Esophagus muscularis mucosa (tissue), 4 donors: ENCODE measurements at regions of chr4 and their contacts with region 1.

Region 1: DNA sequence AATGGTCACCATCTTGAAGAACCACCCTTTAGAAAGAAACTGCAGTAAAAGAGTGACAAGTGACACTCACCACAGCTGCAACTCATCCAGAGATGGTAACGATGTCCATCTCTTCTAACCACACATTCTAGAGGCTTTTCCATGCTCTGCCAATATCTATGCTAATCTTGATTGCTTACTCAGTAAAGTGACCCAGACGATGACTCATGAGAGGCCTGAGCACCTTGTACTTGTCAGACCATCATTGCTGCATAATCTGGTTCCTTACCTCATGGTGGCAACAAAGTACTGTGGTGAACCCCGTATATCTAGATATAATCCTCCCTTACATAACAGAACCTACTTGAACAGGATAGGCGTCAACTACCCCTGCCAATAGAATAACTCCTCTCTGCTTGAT is 75.6 kb downstream of the CCNG2 start:
- DNase-seq: no peak
- H3K4me3 ChIP-seq: no peak overlapping the region
- H3K27ac ChIP-seq: no peak overlapping the region
- H3K4me1 ChIP-seq: peaks cover 0 to 3% (median 0%) of the 10 kb centered on the region in 4 donors
- H3K27me3 ChIP-seq: peaks cover 0 to 13% (median 0%) of the 10 kb centered on the region in 4 donors
- CTCF ChIP-seq: no peak
- EP300 ChIP-seq: no peak
- POLR2A ChIP-seq: no peak

Region 2: GRCh38 chr4:77600521-77601451 is 368.1 kb after region 1 on chr4:
- intact Hi-C with region 1: loop called (anchors 10 kb)
- DNase-seq: no peak
- H3K4me3 ChIP-seq: no peak overlapping the region
- H3K27ac ChIP-seq: no peak overlapping the region
- H3K4me1 ChIP-seq: peaks cover 0 to 8% (median 0%) of the 10 kb centered on the region in 4 donors
- H3K27me3 ChIP-seq: no peaks in the 10 kb centered on the region
- CTCF ChIP-seq: peak; percentile 71 to 82 (median 77)
- EP300 ChIP-seq: no peak
- POLR2A ChIP-seq: no peak